ENCODE measurements at regions of chr12 and their contacts with region 1.

Region 1: DNA sequence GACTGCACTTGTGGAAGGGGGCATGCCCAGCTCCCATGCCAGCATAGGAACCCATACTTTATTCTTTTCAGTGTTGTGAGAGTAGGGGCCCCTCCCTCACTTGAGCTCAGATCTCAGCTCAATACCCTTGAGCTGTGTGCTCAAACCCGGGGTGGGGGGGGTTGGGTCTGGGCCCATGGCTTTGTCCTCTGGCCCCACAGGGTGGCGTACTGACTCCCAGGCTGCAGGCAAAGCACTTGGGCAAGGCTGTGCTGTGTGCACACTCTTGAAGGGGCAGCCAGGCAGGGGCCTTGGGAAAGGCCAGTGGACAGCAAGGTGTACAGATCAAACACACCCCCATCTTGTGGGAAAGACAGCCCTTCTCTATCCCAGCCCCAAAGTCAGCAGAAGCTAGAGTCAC is 81.8 kb downstream of the WIF1 start:
- DNase-seq: no peak
- ATAC-seq: no peak
- H3K4me3 ChIP-seq: no peak overlapping the region
- H3K4me3 Mint-ChIP-seq: no peak overlapping the region
- H3K27ac ChIP-seq: no peak overlapping the region
- H3K27ac Mint-ChIP-seq: no peak overlapping the region
- H3K4me1 ChIP-seq: no peaks in the 10 kb centered on the region
- H3K4me1 Mint-ChIP-seq: no peaks in the 10 kb centered on the region
- H3K27me3 ChIP-seq: peaks cover 8 to 14% of the 10 kb centered on the region in 2 experiments
- H3K27me3 Mint-ChIP-seq: peaks cover 33% of the 10 kb centered on the region
- CTCF ChIP-seq: no peak

Region 2: DNA sequence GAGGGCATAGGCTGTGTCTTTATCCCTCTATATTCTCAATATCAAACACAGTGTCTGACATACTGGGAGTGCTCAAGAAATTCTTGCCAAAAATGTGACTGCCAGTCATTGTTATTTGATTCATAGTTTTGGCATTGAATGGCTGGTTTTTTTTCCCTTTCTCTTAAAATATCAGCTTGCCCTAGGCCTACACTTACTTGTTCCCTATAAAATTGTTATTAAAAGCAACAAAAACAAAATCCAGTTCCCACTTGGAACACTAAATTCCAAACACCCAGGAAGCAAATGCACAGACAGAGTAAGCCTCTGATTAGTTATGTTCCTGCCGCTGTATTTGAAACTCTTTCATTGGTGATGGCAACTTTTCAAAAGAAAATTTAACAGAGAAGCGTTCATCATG is 28.9 kb before region 1 on chr12:
- CTCF ChIA-PET with region 1: no interaction called
- POLR2A ChIA-PET with region 1: no interaction called
- intact Hi-C with region 1: no loop called
- DNase-seq: no peak
- ATAC-seq: no peak
- H3K4me3 ChIP-seq: no peak overlapping the region
- H3K4me3 Mint-ChIP-seq: no peak overlapping the region
- H3K27ac ChIP-seq: no peak overlapping the region
- H3K27ac Mint-ChIP-seq: no peak overlapping the region
- H3K4me1 ChIP-seq: no peaks in the 10 kb centered on the region
- H3K4me1 Mint-ChIP-seq: no peaks in the 10 kb centered on the region
- H3K27me3 ChIP-seq: peaks cover 0 to 4% of the 10 kb centered on the region in 2 experiments
- H3K27me3 Mint-ChIP-seq: peaks cover 15% of the 10 kb centered on the region
- CTCF ChIP-seq: no peak

Region 3: DNA sequence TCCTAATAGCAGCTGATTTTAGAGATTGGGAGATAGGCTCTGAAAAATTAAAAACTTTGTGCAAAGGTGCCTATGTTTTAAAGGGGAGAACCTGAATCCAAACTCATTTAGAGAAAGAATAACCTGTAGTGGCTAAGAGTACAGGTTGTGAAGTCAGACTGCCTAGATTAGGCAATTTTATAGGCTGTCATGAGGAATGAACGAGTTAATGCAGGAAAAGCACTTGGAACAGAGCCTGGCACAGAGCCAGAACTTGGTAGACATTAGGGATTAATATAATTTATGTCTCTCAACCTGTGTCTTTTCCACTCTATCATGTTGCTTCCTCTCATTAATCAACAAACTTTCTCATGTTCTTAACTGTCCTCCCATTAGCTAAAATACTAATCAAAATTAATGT is 16.3 kb before region 1 on chr12:
- CTCF ChIA-PET with region 1: no interaction called
- POLR2A ChIA-PET with region 1: no interaction called
- intact Hi-C with region 1: loop called in 1 of 2 experiments (anchors 1 kb)
- DNase-seq: no peak
- ATAC-seq: no peak
- H3K4me3 ChIP-seq: no peak overlapping the region
- H3K4me3 Mint-ChIP-seq: no peak overlapping the region
- H3K27ac ChIP-seq: no peak overlapping the region
- H3K27ac Mint-ChIP-seq: no peak overlapping the region
- H3K4me1 ChIP-seq: no peaks in the 10 kb centered on the region
- H3K4me1 Mint-ChIP-seq: no peaks in the 10 kb centered on the region
- H3K27me3 ChIP-seq: no peaks in the 10 kb centered on the region
- H3K27me3 Mint-ChIP-seq: peaks cover 12% of the 10 kb centered on the region
- CTCF ChIP-seq: no peak

Measured in CD4-positive, alpha-beta T cell (primary cell).